ENCODE measurements at regions of chr2 and their contacts with region 1.

Region 1: DNA sequence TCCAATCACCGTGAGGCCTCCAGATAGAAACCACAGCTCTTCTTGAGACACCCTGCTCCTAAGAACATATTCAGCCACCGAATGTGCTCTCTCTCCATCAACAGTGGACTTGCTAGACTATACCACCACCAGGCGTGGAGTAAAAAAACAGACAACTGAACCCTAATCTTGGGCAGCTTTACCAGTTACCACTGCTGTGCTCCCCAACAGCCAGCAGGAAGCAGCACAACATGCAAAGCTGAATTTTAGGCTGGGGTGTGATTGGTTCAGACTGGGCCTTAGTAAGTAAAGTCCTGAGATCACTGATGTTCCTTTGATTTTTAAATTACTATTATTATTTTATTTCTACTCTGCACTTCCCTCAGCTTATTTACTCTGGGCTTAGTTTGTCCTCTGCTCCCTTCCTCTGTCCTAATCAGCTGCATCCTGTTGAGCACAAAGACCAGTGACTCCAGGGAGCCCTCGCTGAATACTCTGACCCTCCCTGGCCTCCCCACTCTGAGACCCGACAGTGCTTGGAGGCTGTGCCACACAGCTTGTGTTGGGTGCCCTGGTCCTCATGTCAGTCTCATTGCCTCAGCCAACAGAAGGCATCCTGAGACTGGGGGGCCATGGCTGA is 21.9 kb downstream of the MRPL35 start:
- DNase-seq: peak; percentile 79
- H3K4me3 ChIP-seq: no peak overlapping the region
- H3K27ac ChIP-seq: peak overlapping the region; percentile 84 to 96 (median 92)
- H3K4me1 ChIP-seq: peaks cover 0 to 55% (median 50%) of the 10 kb centered on the region in 4 donors
- H3K27me3 ChIP-seq: no peaks in the 10 kb centered on the region
- CTCF ChIP-seq: peak; percentile 89 to 93 (median 92)
- EP300 ChIP-seq: no peak
- POLR2A ChIP-seq: no peak

Region 2: DNA sequence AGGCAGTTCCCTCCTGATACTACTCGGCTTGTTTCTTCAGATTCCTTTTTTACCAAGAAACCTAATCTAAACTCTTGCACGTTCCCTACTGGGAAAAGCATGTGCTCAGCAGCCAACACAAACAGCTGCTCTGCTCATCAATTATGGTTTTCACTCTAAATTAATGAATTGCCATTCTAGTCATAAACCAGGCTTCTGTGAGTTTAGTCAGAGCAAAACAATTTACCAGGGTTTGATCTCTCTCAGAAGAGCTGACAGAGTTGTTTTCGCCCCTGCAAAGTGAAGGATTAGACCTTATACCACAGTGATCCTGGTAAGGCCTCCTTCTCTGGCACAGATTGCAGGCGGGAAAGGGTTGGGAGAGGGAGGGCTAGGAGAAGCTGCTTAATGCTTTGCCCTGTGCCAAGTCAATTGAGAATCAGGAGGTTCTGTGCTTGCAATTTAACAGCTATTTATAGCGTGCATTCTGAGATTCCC is 59.1 kb after region 1 on chr2:
- intact Hi-C with region 1: loop called (anchors 5 kb)
- DNase-seq: peak; percentile 85
- H3K4me3 ChIP-seq: no peak overlapping the region
- H3K27ac ChIP-seq: peak overlapping the region; percentile 64 to 82 (median 76)
- H3K4me1 ChIP-seq: peaks cover 0 to 65% (median 61%) of the 10 kb centered on the region in 4 donors
- H3K27me3 ChIP-seq: no peaks in the 10 kb centered on the region
- CTCF ChIP-seq: no peak
- EP300 ChIP-seq: no peak
- POLR2A ChIP-seq: no peak

Region 3: DNA sequence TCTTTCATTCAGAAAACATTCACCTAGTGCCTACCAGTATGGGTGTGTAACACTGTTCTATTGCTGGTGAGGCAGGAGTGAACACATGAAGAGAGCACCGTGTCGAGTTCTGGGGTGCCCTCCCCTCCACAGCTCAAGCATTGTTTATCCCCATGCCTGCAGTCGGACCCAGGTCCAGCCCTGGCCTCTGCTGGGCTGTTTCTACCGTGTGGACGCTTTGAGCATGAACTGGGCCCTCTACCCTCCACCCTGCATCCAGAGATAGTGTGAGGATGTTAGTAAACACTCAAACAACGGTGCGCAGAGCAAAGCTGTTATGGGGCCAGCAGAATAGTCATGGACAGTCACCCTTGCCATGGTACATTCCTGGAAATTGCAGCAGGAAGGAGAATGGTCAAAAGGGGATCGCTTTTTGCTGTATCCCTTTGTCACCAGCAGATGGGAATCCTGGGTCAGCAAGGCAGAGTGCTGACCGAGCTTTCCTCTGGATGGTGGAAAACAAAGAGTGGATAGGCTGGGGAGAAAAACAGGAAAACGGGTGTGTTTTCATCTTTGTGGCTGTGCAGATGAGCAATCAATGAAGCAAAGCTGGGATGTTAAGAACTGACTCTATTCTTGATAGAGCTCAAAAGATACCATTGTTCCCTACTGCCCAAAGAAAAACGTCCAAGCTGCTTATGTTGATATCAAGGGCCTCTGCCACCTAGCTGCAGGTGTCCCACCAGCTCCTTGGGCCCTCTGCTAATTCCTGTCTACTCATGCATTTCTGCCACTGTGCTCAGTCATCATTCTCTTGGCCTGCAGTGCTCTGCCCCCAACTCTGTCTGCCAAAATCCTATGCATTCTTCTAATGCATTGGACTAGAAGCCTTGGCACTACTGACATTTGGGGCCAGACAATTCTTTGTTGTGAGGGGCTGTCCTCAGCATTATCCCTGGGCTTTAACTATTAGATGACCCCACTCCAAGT is 77.5 kb after region 1 on chr2:
- intact Hi-C with region 1: loop called (anchors 2 kb)
- DNase-seq: no peak
- H3K4me3 ChIP-seq: no peak overlapping the region
- H3K27ac ChIP-seq: peak overlapping the region; percentile 69 to 82 (median 78)
- H3K4me1 ChIP-seq: peaks cover 0 to 77% (median 71%) of the 10 kb centered on the region in 4 donors
- H3K27me3 ChIP-seq: no peaks in the 10 kb centered on the region
- CTCF ChIP-seq: peak in 1 of 4 experiments; percentile 29
- EP300 ChIP-seq: no peak
- POLR2A ChIP-seq: no peak

Region 4: DNA sequence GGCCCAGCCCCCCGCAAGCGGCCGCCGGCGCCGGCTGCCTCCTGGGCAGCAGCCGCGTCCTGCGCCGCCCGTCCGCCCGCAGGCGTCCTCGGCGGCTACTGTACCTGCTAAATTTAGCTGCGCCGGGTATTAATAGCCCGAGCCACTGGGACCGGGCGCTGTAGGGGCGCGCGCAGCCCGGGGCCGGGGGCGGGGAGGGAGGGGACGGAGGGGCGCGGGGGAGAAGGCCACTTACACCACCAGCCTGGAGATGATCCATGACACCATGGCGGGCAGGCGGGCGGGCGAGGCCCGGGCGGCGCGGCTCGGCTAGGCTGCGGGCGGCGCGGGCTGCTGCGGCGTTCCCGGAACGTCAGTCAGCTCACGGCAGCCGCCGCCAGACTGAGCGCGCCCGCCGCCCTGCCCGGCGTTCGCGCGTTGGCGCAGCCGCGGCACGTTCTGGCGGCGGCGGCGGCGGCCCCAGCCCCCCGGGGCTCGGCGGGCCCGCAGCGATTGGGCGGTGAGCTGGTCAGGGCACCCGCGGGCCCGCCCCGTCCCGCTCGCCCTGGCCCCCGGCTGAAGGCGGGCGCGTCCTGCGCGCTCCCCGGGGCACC is 116.2 kb after region 1 on chr2 and contains the start of gene REEP1:
- intact Hi-C with region 1: loop called (anchors 10 kb)
- DNase-seq: peak; percentile 72
- H3K4me3 ChIP-seq: peak within 1 kb of the TSS; percentile 59 to 69 (median 60)
- H3K27ac ChIP-seq: peak within 1 kb of the TSS; percentile 79 to 83 (median 82)
- H3K4me1 ChIP-seq: peaks cover 0 to 42% (median 30%) of the 10 kb centered on the region in 4 donors
- H3K27me3 ChIP-seq: peaks cover 0 to 5% (median 0%) of the 10 kb centered on the region in 3 donors
- CTCF ChIP-seq: no peak
- EP300 ChIP-seq: no peak
- POLR2A ChIP-seq: no peak
- total RNA-seq, gene REEP1: 44.9 to 98.0 (median 70.6) TPM

Region 5: GRCh38 chr2:86368161-86368824 is 147.1 kb after region 1 on chr2:
- intact Hi-C with region 1: loop called (anchors 1 kb)
- DNase-seq: no peak
- H3K4me3 ChIP-seq: peak overlapping the region in 1 of 4 donors; percentile 2
- H3K27ac ChIP-seq: no peak overlapping the region
- H3K4me1 ChIP-seq: peaks cover 0 to 13% (median 9%) of the 10 kb centered on the region in 4 donors
- H3K27me3 ChIP-seq: no peaks in the 10 kb centered on the region
- CTCF ChIP-seq: peak; percentile 32 to 59 (median 50)
- EP300 ChIP-seq: no peak
- POLR2A ChIP-seq: no peak

Region 6: GRCh38 chr2:86440631-86441391 is 219.6 kb after region 1 on chr2 and contains the start of gene KDM3A:
- intact Hi-C with region 1: loop called (anchors 5 kb)
- DNase-seq: peak; percentile 100
- H3K4me3 ChIP-seq: peak within 1 kb of the TSS; percentile 62 to 88 (median 80)
- H3K27ac ChIP-seq: peak within 1 kb of the TSS; percentile 95 to 98 (median 97)
- H3K4me1 ChIP-seq: peaks cover 2 to 31% (median 30%) of the 10 kb centered on the region in 4 donors
- H3K27me3 ChIP-seq: no peaks in the 10 kb centered on the region
- CTCF ChIP-seq: no peak
- EP300 ChIP-seq: peak in 3 of 4 donors; percentile 56 to 64 (median 60)
- POLR2A ChIP-seq: peak; percentile 88 to 94
- total RNA-seq, gene KDM3A: 31.6 to 61.2 (median 49.8) TPM

Region 7: GRCh38 chr2:86500325-86501083 is 279.3 kb after region 1 on chr2:
- intact Hi-C with region 1: no loop called
- DNase-seq: no peak
- H3K4me3 ChIP-seq: no peak overlapping the region
- H3K27ac ChIP-seq: no peak overlapping the region
- H3K4me1 ChIP-seq: no peaks in the 10 kb centered on the region
- H3K27me3 ChIP-seq: no peaks in the 10 kb centered on the region
- CTCF ChIP-seq: no peak
- EP300 ChIP-seq: no peak
- POLR2A ChIP-seq: no peak

Region 8: GRCh38 chr2:86518481-86518880 is 297.3 kb after region 1 on chr2:
- intact Hi-C with region 1: no loop called
- DNase-seq: no peak
- H3K4me3 ChIP-seq: no peak overlapping the region
- H3K27ac ChIP-seq: no peak overlapping the region
- H3K4me1 ChIP-seq: peaks cover 0 to 20% (median 3%) of the 10 kb centered on the region in 4 donors
- H3K27me3 ChIP-seq: no peaks in the 10 kb centered on the region
- CTCF ChIP-seq: peak in 3 of 4 experiments; percentile 15 to 56 (median 55)
- EP300 ChIP-seq: no peak
- POLR2A ChIP-seq: no peak